H1 (cell line): ENCODE measurements at regions of chr14 and their contacts with region 1.

Region 1: GRCh38 chr14:37246427-37246914 is 48.7 kb downstream of the MIPOL1 start:
- DNase-seq: no peak
- H3K4me3 ChIP-seq: no peak overlapping the region
- H3K27ac ChIP-seq: no peak overlapping the region
- H3K4me1 ChIP-seq: no peaks in the 10 kb centered on the region
- H3K27me3 ChIP-seq: no peaks in the 10 kb centered on the region
- CTCF ChIP-seq: peak in 2 of 3 experiments; percentile 45 to 58; a peak in 2 of 4 replicates
- EP300 ChIP-seq: no peak
- POLR2A ChIP-seq: no peak
- RAD21 ChIP-seq: peak; percentile 78 to 79

Region 2: DNA sequence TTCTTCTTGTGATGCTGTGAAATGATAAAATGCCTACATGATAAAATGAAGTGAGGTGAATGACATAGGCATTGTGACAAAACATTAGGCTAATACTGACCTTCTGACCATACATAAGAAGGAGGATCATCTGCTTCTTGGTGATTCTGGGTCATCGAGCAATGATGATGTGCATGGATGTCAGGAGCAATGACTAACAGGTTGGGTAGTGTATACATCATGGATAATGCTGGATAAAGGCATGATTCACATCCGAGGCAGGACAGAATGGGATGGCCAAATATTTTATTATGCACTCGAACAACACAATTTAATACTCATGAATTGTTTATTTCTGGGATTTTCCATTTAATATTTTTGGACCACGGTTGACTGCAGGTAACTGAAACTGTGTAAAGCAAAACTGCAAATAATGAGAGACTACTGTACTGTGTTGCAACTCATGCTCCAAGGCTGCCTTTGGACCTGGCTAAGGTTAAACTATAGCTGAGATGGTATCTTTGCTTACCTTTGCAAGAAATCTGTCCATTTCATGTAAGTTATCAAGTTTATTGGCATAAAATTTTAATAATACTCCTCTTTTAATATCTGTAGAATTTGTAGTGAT is 66.5 kb before region 1 on chr14:
- CTCF ChIA-PET with region 1: no interaction called
- POLR2A ChIA-PET with region 1: no interaction called
- DNase-seq: no peak
- H3K4me3 ChIP-seq: no peak overlapping the region
- H3K27ac ChIP-seq: no peak overlapping the region
- H3K4me1 ChIP-seq: no peaks in the 10 kb centered on the region
- H3K27me3 ChIP-seq: no peaks in the 10 kb centered on the region
- CTCF ChIP-seq: no peak
- EP300 ChIP-seq: no peak
- POLR2A ChIP-seq: no peak
- RAD21 ChIP-seq: no peak

Region 3: DNA sequence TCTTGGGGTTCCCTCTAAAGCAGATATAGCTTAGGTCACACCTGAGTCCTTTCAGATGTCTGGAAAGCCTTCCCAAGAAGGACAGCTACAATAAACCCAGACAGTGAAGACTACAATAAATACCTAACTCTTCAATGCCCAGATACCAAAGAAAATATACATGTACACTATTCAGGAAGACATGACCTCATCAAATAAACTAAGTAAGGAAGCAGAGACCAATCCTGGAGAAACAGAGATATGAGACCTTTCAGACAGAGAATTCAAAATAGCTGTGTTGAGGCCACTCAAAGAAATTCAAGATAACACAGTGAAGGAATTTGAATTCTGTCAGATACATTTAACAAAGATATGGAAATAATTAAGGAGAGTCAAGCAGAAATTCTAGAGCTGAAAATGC is 33.5 kb before region 1 on chr14:
- CTCF ChIA-PET with region 1: no interaction called
- POLR2A ChIA-PET with region 1: no interaction called
- DNase-seq: no peak
- H3K4me3 ChIP-seq: no peak overlapping the region
- H3K27ac ChIP-seq: no peak overlapping the region
- H3K4me1 ChIP-seq: no peaks in the 10 kb centered on the region
- H3K27me3 ChIP-seq: no peaks in the 10 kb centered on the region
- CTCF ChIP-seq: no peak
- EP300 ChIP-seq: no peak
- POLR2A ChIP-seq: no peak
- RAD21 ChIP-seq: no peak

Region 4: DNA sequence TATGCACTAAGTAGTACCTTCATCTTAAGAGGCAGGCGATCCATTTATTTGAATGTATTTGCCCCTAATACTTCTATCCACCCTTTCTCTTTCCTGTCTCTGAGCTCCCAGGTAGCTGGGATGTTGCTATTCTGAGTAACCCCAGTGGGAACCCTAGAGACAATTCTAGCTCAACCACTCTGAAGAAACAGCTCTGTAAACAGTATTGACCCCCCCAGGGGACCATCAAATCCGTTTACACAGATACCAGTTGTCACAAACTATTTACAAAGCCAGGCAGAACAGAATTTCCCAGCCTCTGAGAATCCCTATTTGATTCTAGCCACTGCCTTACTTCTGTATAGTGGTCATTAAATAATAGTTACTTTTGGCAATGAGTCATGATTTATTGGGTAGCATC is 16.2 kb after region 1 on chr14:
- CTCF ChIA-PET with region 1: no interaction called
- POLR2A ChIA-PET with region 1: no interaction called
- DNase-seq: no peak
- H3K4me3 ChIP-seq: no peak overlapping the region
- H3K27ac ChIP-seq: no peak overlapping the region
- H3K4me1 ChIP-seq: peaks cover 0 to 2% (median 0%) of the 10 kb centered on the region in 4 experiments; a peak in 1 of 7 replicates
- H3K27me3 ChIP-seq: no peaks in the 10 kb centered on the region
- CTCF ChIP-seq: no peak
- EP300 ChIP-seq: no peak
- POLR2A ChIP-seq: no peak
- RAD21 ChIP-seq: no peak

Region 5: GRCh38 chr14:37311252-37311651 is 64.8 kb after region 1 on chr14:
- CTCF ChIA-PET with region 1: no interaction called
- POLR2A ChIA-PET with region 1: no interaction called
- DNase-seq: no peak
- H3K4me3 ChIP-seq: no peak overlapping the region
- H3K27ac ChIP-seq: no peak overlapping the region
- H3K4me1 ChIP-seq: no peaks in the 10 kb centered on the region
- H3K27me3 ChIP-seq: no peaks in the 10 kb centered on the region
- CTCF ChIP-seq: no peak
- EP300 ChIP-seq: no peak
- POLR2A ChIP-seq: no peak
- RAD21 ChIP-seq: no peak

Region 6: GRCh38 chr14:37563189-37563588 is 316.7 kb after region 1 on chr14:
- CTCF ChIA-PET with region 1: interaction called, 11 read pairs
- POLR2A ChIA-PET with region 1: no interaction called
- DNase-seq: no peak
- H3K4me3 ChIP-seq: no peak overlapping the region
- H3K27ac ChIP-seq: no peak overlapping the region
- H3K4me1 ChIP-seq: peaks cover 0 to 1% (median 0%) of the 10 kb centered on the region in 4 experiments; a peak in 1 of 7 replicates
- H3K27me3 ChIP-seq: no peaks in the 10 kb centered on the region
- CTCF ChIP-seq: no peak
- EP300 ChIP-seq: no peak
- POLR2A ChIP-seq: no peak
- RAD21 ChIP-seq: no peak

Region 7: DNA sequence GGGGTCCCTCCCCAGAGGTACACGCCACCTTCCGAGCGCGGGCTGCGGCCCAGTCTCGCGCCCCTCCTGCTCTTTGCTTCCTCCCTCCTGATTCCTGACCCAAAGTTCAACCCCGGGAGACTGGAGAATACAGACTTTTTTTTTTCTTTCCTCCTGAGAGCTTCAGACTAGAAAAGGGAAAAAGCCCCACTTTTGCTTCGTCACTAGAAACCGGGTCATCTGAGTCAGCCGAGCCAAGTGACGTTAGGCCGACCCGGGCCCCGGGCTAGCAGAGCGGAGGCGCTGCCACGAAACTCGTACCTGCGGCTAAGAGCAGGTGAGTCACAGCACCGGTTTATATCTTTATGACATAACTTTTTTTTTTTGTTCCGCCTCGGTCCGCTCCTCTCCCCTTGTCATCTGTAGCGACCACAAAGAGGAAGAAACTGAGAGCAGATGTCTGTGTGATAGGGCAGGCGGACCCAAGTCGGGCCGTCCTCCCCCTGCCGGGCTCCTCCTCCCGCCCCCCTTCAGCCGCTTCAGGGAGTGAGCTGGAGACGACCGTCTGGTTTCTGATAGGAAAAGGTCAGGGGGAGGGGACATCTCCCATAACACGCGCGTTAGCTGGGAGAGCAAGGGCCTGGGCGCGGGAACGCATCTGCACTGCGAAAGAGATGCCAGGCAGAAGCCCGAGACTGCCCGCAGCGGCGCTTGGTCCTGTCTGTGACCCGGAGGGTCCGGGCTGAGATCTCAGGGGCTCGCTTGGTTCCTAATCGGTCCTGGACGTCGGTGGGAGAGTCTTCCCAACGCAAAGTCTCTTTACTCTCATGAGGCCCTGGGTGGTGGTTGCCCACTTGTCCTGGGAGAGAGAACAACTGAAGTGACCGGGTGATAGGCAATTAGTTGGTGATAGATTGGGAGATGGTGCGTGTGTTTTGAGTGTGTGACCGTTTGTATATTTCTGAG is 349.5 kb after region 1 on chr14:
- CTCF ChIA-PET with region 1: interaction called, 14 read pairs
- POLR2A ChIA-PET with region 1: no interaction called
- DNase-seq: peak in 1 of 2 experiments; percentile 79
- H3K4me3 ChIP-seq: peak overlapping the region; percentile 26 to 60 (median 32); a peak in 5 of 8 replicates
- H3K27ac ChIP-seq: no peak overlapping the region
- H3K4me1 ChIP-seq: peaks cover 0 to 27% (median 13%) of the 10 kb centered on the region in 4 experiments; a peak in 6 of 7 replicates
- H3K27me3 ChIP-seq: peaks cover 82 to 99% (median 93%) of the 10 kb centered on the region in 4 experiments
- CTCF ChIP-seq: no peak
- EP300 ChIP-seq: no peak
- POLR2A ChIP-seq: no peak
- RAD21 ChIP-seq: no peak